Ovary (tissue), 10 donors: ENCODE measurements at regions of chrX and their contacts with region 1.

Region 1: DNA sequence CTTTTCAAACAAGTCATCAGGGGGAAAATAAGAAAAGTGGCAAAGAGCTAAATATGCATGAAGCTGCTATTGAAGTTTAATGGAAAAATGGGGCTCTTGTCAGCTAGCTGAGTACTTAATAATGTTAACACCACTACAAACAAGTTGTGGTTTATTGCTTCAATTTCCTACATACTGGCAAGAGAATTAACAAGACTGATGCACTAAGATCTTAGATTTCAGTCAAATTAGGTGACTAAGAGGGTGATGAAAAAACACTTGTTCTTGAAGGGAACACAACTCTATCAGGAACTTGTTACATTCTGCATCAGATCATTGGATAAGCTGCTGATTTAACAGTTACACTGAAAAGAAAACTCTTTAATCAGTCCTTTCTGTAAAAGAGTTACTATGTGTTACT is 234.6 kb upstream of the AFF2 start:
- DNase-seq: no peak
- H3K4me3 ChIP-seq: no peak overlapping the region
- H3K27ac ChIP-seq: no peak overlapping the region
- H3K4me1 ChIP-seq: no peaks in the 10 kb centered on the region
- H3K27me3 ChIP-seq: no peaks in the 10 kb centered on the region
- CTCF ChIP-seq: no peak
- EP300 ChIP-seq: no peak
- POLR2A ChIP-seq: no peak

Region 2: GRCh38 chrX:148282504-148282903 is 16.7 kb after region 1 on chrX:
- intact Hi-C with region 1: loop called in 1 of 4 experiments (anchors 1 kb)
- DNase-seq: no peak
- H3K4me3 ChIP-seq: no peak overlapping the region
- H3K27ac ChIP-seq: no peak overlapping the region
- H3K4me1 ChIP-seq: no peaks in the 10 kb centered on the region
- H3K27me3 ChIP-seq: no peaks in the 10 kb centered on the region
- CTCF ChIP-seq: no peak
- EP300 ChIP-seq: no peak
- POLR2A ChIP-seq: no peak

Region 3: GRCh38 chrX:148385471-148385870 is 119.6 kb after region 1 on chrX:
- intact Hi-C with region 1: no loop called
- DNase-seq: no peak
- H3K4me3 ChIP-seq: no peak overlapping the region
- H3K27ac ChIP-seq: no peak overlapping the region
- H3K4me1 ChIP-seq: no peaks in the 10 kb centered on the region
- H3K27me3 ChIP-seq: no peaks in the 10 kb centered on the region
- CTCF ChIP-seq: no peak
- EP300 ChIP-seq: no peak
- POLR2A ChIP-seq: no peak

Region 4: DNA sequence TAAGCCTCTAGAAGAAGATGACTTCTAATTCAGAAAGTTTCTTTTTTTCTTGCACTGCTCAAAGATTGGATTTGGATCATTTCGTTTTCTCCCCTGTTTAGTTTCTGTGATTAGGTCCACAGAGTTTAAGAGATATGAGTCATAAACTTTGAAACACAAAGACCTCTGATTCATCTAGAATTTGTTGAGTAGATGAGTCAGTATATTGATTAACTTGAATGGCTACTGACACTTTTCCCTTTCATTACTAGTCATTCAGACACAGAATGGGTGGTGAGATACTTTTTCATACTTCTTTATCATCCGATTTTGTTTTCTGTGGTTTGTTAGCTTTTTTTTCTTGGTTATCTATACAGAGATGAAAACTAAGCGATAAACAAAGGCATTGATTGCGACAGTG is 200.5 kb after region 1 on chrX:
- intact Hi-C with region 1: no loop called
- DNase-seq: no peak
- H3K4me3 ChIP-seq: no peak overlapping the region
- H3K27ac ChIP-seq: no peak overlapping the region
- H3K4me1 ChIP-seq: no peaks in the 10 kb centered on the region
- H3K27me3 ChIP-seq: no peaks in the 10 kb centered on the region
- CTCF ChIP-seq: no peak
- EP300 ChIP-seq: no peak
- POLR2A ChIP-seq: no peak